ENCODE measurements at regions of chr12 and their contacts with region 1.

Region 1: GRCh38 chr12:121678716-121679580 is 9.5 kb upstream of the MORN3 start:
- DNase-seq: no peak
- ATAC-seq: no peak
- H3K4me3 ChIP-seq: no peak overlapping the region
- H3K27ac ChIP-seq: no peak overlapping the region
- H3K4me1 ChIP-seq: no peaks in the 10 kb centered on the region
- H3K27me3 ChIP-seq: no peaks in the 10 kb centered on the region

Region 2: DNA sequence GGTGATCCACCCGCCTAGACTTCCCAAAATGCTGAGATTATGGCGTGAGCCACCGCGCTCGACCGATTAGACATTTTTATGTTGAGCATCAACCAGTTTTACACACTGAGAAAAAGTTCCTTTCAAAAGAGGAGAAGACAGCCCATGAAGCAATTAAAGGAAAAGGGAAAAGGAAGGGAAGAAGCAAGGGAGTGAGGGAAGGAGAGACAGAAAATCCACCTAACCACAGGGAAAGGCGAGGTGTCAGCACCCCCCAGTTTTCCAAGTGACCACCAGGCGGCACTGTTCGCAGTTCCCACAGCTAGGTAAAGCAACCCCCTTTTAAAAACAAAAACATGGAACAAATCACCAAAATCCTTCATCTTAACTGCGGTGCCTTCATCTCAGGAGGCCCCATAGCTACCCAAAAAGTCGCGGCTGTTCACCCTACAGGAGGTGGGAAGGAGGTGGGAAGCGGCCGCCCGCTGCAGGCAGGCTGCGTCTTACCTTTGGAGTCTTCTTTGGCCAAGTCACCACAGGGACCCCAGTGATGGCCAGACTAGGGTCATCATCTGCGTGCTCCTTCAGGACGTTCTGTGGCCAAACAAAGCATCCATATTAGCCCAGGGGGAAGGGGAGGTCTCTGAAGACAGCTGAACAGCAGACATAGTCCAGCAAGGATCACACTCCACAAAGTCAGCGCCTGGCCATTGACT is 184.7 kb before region 1 on chr12:
- intact Hi-C with region 1: loop called (anchors 5 to 10 kb)
- DNase-seq: peak; percentile 50 to 84
- ATAC-seq: no peak
- H3K4me3 ChIP-seq: no peak overlapping the region
- H3K27ac ChIP-seq: no peak overlapping the region
- H3K4me1 ChIP-seq: no peaks in the 10 kb centered on the region
- H3K27me3 ChIP-seq: no peaks in the 10 kb centered on the region

Region 3: GRCh38 chr12:121499929-121500793 is 178.8 kb before region 1 on chr12:
- intact Hi-C with region 1: loop called (anchors 5 to 10 kb)
- DNase-seq: peak; percentile 84 to 94
- ATAC-seq: peak; percentile 90
- H3K4me3 ChIP-seq: peak overlapping the region in 1 of 2 donors; percentile 21
- H3K27ac ChIP-seq: peak overlapping the region in 1 of 2 donors; percentile 58
- H3K4me1 ChIP-seq: no peaks in the 10 kb centered on the region
- H3K27me3 ChIP-seq: no peaks in the 10 kb centered on the region

Region 4: GRCh38 chr12:121550974-121551634 is 127.8 kb before region 1 on chr12:
- intact Hi-C with region 1: loop called (anchors 2 to 5 kb)
- DNase-seq: no peak
- ATAC-seq: no peak
- H3K4me3 ChIP-seq: no peak overlapping the region
- H3K27ac ChIP-seq: no peak overlapping the region
- H3K4me1 ChIP-seq: no peaks in the 10 kb centered on the region
- H3K27me3 ChIP-seq: no peaks in the 10 kb centered on the region

Region 5: GRCh38 chr12:121568971-121569751 is 109.8 kb before region 1 on chr12:
- intact Hi-C with region 1: no loop called
- DNase-seq: peak in 1 of 2 donors; percentile 79
- ATAC-seq: peak; percentile 75
- H3K4me3 ChIP-seq: no peak overlapping the region
- H3K27ac ChIP-seq: no peak overlapping the region
- H3K4me1 ChIP-seq: no peaks in the 10 kb centered on the region
- H3K27me3 ChIP-seq: no peaks in the 10 kb centered on the region

Region 6: DNA sequence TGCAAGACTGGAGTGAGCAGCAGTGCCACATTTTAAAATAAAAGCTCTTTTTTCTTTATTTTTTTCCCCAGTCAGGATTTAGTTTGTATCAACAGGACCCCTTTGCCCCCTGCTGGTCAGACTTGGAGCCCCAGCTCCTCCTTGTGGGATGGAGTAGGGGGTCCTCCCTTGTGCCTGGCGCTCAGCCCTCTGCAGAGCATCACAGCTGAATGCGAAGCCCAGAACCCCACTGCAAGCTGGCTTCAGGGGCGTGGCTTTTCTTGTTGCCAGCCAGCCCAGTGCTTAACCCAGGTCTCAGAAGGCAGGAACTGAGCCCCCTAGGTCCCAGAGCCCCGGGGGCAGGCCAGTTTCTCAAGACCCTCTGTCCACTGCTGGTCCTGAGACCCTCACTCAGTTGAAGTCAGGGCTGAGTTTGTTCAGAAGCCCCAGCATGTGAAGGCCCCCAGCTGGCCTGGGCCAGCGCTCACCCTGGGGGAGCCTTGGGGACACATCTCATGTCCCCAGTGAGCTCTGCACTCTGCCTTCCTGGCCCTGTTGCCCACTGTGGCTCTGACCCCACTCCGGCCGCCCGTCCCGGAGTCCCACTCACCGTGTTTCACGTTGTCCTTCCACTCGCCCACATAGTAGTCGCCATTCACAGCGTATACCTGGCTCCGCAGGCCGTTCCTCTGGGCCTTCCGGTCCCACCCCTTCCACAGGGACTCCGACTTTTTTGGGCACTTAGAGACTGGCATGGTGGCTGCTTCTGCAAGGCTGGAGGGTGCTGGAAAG is 10.0 kb before region 1 on chr12:
- intact Hi-C with region 1: no loop called
- DNase-seq: peak in 1 of 2 donors; percentile 51
- ATAC-seq: no peak
- H3K4me3 ChIP-seq: no peak overlapping the region
- H3K27ac ChIP-seq: no peak overlapping the region
- H3K4me1 ChIP-seq: no peaks in the 10 kb centered on the region
- H3K27me3 ChIP-seq: no peaks in the 10 kb centered on the region